Transverse colon (tissue), 4 donors: ENCODE measurements at regions of chr5 and their contacts with region 1.

Region 1: GRCh38 chr5:136364307-136364706 is 1.0 kb downstream of the TRPC7 start:
- DNase-seq: no peak
- H3K4me3 ChIP-seq: no peak overlapping the region
- H3K27ac ChIP-seq: no peak overlapping the region
- H3K4me1 ChIP-seq: no peaks in the 10 kb centered on the region
- H3K27me3 ChIP-seq: no peaks in the 10 kb centered on the region
- CTCF ChIP-seq: peak in 1 of 5 experiments; percentile 11
- EP300 ChIP-seq: no peak
- POLR2A ChIP-seq: no peak

Region 2: DNA sequence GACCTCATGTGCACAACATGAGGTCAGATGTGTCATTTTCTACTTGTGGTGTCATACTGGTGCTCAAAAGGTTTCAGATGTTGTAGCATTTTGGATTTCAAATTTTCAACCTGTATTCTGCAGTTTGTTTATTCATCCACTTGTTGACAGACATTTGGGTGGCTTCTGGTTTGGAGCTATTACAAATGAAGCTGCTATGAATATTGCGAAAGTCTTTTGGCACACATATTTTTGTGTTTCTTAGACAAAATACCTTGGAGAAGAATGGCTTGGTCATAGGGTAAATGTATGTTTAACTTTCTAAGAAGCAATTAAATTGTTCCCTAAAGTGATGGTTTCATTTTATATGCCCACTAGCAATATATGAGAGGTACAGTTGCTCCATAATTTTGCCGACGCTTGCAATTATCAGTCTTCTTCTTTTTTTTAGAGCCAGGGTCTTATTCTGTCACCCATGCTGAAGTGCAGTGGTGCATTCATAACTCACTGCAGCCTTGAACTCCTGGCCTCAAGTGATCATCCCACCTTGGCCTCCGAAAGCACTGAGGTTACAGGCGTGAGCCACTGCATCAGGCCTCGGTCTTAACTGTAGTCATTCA is 71.7 kb after region 1 on chr5:
- in situ Hi-C with region 1: no loop called
- intact Hi-C with region 1: loop called (anchors 5 kb)
- DNase-seq: no peak
- H3K4me3 ChIP-seq: no peak overlapping the region
- H3K27ac ChIP-seq: no peak overlapping the region
- H3K4me1 ChIP-seq: no peaks in the 10 kb centered on the region
- H3K27me3 ChIP-seq: no peaks in the 10 kb centered on the region
- CTCF ChIP-seq: no peak
- EP300 ChIP-seq: no peak
- POLR2A ChIP-seq: no peak